CD8-positive, alpha-beta memory T cell (primary cell): ENCODE measurements at regions of chr11 and their contacts with region 1.

Region 1: DNA sequence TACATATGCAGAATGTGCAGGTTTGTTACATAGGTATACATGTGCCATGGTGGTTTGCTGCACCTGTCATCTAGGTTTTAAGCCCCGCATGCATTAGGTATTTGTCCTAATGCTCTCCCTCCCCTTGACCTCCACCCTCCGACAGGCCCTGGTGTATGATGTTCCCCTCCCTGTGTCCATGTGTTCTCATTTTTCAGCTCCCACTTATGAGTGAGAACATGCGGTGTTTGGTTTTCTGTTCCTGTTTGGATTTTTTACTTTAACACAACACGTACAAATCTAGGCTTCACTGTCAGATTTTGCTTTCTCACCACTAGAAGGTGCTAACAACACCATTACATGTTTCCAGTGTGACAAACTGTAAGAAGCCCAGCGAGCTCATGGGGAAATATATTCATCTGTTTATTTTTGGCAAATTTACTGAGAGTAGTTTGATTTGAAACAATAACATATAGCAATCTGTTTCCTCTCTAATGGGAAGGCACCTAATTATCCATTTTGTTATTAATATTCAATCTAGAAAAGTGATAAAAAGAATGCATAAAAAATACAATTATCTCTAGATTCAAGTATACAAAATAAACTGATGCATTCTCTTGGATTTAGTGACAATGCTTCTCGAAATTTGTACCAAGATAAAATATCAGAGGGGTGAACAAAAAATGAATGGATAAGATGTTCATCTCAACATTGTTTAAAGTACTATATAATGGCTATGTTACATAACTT is 23.2 kb upstream of the BIRC3 start:
- DNase-seq: peak in 2 of 5 donors; percentile 58 to 64
- H3K4me3 ChIP-seq: peak overlapping the region; percentile 45
- H3K4me3 Mint-ChIP-seq: peak overlapping the region; percentile 82 to 96 (median 92)
- H3K27ac ChIP-seq: no peak overlapping the region
- H3K27ac Mint-ChIP-seq: peak overlapping the region; percentile 21 to 99 (median 96)
- H3K4me1 ChIP-seq: peaks cover 16% of the 10 kb centered on the region
- H3K4me1 Mint-ChIP-seq: peaks cover 20 to 43% (median 42%) of the 10 kb centered on the region in 3 donors
- H3K27me3 ChIP-seq: no peaks in the 10 kb centered on the region
- H3K27me3 Mint-ChIP-seq: no peaks in the 10 kb centered on the region

Region 2: GRCh38 chr11:102240502-102240901 is 53.5 kb before region 1 on chr11:
- CTCF ChIA-PET with region 1: no interaction called
- POLR2A ChIA-PET with region 1: no interaction called
- DNase-seq: no peak
- H3K4me3 ChIP-seq: no peak overlapping the region
- H3K4me3 Mint-ChIP-seq: no peak overlapping the region
- H3K27ac ChIP-seq: no peak overlapping the region
- H3K27ac Mint-ChIP-seq: no peak overlapping the region
- H3K4me1 ChIP-seq: no peaks in the 10 kb centered on the region
- H3K4me1 Mint-ChIP-seq: no peaks in the 10 kb centered on the region
- H3K27me3 ChIP-seq: no peaks in the 10 kb centered on the region
- H3K27me3 Mint-ChIP-seq: peaks cover 14 to 46% of the 10 kb centered on the region in 2 donors

Region 3: GRCh38 chr11:102306048-102306585 is 12.1 kb after region 1 on chr11:
- CTCF ChIA-PET with region 1: interaction called, 45 read pairs
- POLR2A ChIA-PET with region 1: interaction called, 9 read pairs
- DNase-seq: no peak
- H3K4me3 ChIP-seq: peak overlapping the region; percentile 24
- H3K4me3 Mint-ChIP-seq: peak overlapping the region; percentile 24 to 78 (median 61)
- H3K27ac ChIP-seq: no peak overlapping the region
- H3K27ac Mint-ChIP-seq: peak overlapping the region; percentile 76 to 99 (median 90)
- H3K4me1 ChIP-seq: peaks cover 67% of the 10 kb centered on the region
- H3K4me1 Mint-ChIP-seq: peaks cover 55 to 78% (median 77%) of the 10 kb centered on the region in 3 donors
- H3K27me3 ChIP-seq: no peaks in the 10 kb centered on the region
- H3K27me3 Mint-ChIP-seq: peaks cover 0 to 1% of the 10 kb centered on the region in 2 donors

Region 4: DNA sequence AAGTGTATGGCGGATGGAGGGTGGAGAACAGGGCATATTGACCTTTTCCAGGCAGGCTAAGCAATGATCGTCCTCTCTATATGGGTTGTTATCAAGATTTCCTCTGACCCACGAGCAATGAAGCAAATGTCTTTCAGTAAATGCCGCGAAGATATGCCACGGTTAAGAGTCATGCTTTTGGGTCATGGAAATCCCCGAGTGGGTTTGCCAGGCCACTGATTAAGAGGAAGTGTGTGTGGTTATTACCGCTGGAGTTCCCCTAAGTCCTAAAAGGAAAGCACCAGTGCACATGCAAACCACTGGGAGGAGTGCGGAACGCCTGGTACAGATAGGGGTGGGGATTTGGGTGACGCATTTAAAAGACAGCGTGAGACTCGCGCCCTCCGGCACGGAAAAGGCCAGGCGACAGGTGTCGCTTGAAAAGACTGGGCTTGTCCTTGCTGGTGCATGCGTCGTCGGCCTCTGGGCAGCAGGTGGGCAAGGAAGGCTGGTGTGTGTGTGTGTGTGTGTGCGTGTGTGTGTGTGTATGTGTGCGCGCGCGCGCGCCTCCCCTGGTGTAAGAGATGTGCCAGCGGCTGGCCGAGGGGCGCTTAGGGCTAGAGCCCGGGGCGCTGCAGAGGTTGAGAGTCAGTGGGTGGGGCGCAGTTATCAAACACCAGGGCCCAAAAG is 23.2 kb after region 1 on chr11 and contains the start of gene BIRC3:
- CTCF ChIA-PET with region 1: interaction called, 63 read pairs
- POLR2A ChIA-PET with region 1: interaction called, 19 read pairs
- DNase-seq: peak; percentile 84 to 97 (median 93)
- H3K4me3 ChIP-seq: peak within 1 kb of the TSS; percentile 89
- H3K4me3 Mint-ChIP-seq: peak within 1 kb of the TSS; percentile 90 to 98 (median 95)
- H3K27ac ChIP-seq: peak within 1 kb of the TSS; percentile 86
- H3K27ac Mint-ChIP-seq: peak within 1 kb of the TSS; percentile 92 to 100 (median 99)
- H3K4me1 ChIP-seq: peaks cover 58% of the 10 kb centered on the region
- H3K4me1 Mint-ChIP-seq: peaks cover 68 to 79% (median 69%) of the 10 kb centered on the region in 3 donors
- H3K27me3 ChIP-seq: no peaks in the 10 kb centered on the region
- H3K27me3 Mint-ChIP-seq: peaks cover 0 to 3% of the 10 kb centered on the region in 2 donors
- total RNA-seq, gene BIRC3: 191 to 199 TPM

Region 5: GRCh38 chr11:102323542-102324251 is 29.7 kb after region 1 on chr11:
- CTCF ChIA-PET with region 1: interaction called, 63 read pairs
- POLR2A ChIA-PET with region 1: interaction called, 19 read pairs
- DNase-seq: no peak
- H3K4me3 ChIP-seq: no peak overlapping the region
- H3K4me3 Mint-ChIP-seq: peak overlapping the region in 2 of 7 donors; percentile 29 to 44
- H3K27ac ChIP-seq: no peak overlapping the region
- H3K27ac Mint-ChIP-seq: peak overlapping the region in 7 of 8 donors; percentile 40 to 93 (median 66)
- H3K4me1 ChIP-seq: peaks cover 45% of the 10 kb centered on the region
- H3K4me1 Mint-ChIP-seq: peaks cover 45 to 81% (median 73%) of the 10 kb centered on the region in 3 donors
- H3K27me3 ChIP-seq: no peaks in the 10 kb centered on the region
- H3K27me3 Mint-ChIP-seq: no peaks in the 10 kb centered on the region

Region 6: GRCh38 chr11:102332611-102332994 is 38.6 kb after region 1 on chr11:
- CTCF ChIA-PET with region 1: interaction called, 20 read pairs
- POLR2A ChIA-PET with region 1: no interaction called
- DNase-seq: no peak
- H3K4me3 ChIP-seq: no peak overlapping the region
- H3K4me3 Mint-ChIP-seq: no peak overlapping the region
- H3K27ac ChIP-seq: no peak overlapping the region
- H3K27ac Mint-ChIP-seq: peak overlapping the region in 6 of 8 donors; percentile 13 to 81 (median 66)
- H3K4me1 ChIP-seq: peaks cover 4% of the 10 kb centered on the region
- H3K4me1 Mint-ChIP-seq: peaks cover 5 to 35% (median 28%) of the 10 kb centered on the region in 3 donors
- H3K27me3 ChIP-seq: no peaks in the 10 kb centered on the region
- H3K27me3 Mint-ChIP-seq: no peaks in the 10 kb centered on the region

Region 7: DNA sequence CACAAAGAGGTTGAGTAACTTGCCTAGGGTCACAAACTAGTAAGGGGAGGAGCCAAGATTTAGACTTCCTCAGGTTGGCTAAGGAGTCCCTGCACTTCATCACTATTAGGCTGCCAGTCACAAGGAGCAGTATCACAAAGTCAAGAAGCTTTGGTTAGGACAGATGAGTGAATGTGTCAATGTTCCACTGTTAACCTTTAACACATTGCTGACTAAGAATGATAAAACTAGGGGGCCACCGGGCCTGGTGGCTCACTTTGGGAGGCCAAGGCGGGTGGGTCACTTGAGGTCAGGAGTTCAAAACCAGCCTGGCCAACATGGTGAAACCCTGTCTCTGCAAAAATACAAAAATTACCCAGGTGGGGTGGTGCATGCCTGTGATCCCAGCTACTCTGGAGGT is 126.5 kb after region 1 on chr11:
- CTCF ChIA-PET with region 1: no interaction called
- POLR2A ChIA-PET with region 1: no interaction called
- DNase-seq: no peak
- H3K4me3 ChIP-seq: no peak overlapping the region
- H3K4me3 Mint-ChIP-seq: no peak overlapping the region
- H3K27ac ChIP-seq: no peak overlapping the region
- H3K27ac Mint-ChIP-seq: peak overlapping the region in 7 of 8 donors; percentile 37 to 92 (median 66)
- H3K4me1 ChIP-seq: peaks cover 74% of the 10 kb centered on the region
- H3K4me1 Mint-ChIP-seq: peaks cover 89 to 100% (median 100%) of the 10 kb centered on the region in 3 donors
- H3K27me3 ChIP-seq: no peaks in the 10 kb centered on the region
- H3K27me3 Mint-ChIP-seq: no peaks in the 10 kb centered on the region